ENCODE measurements at regions of chr1 and their contacts with region 1.

Region 1: GRCh38 chr1:93345633-93346420 is at the start of gene DR1:
- DNase-seq: peak; percentile 73 to 93
- H3K4me3 ChIP-seq: peak within 1 kb of the TSS; percentile 44 to 88 (median 78)
- H3K27ac ChIP-seq: peak within 1 kb of the TSS; percentile 92
- H3K4me1 ChIP-seq: no peaks in the 10 kb centered on the region
- H3K27me3 ChIP-seq: no peaks in the 10 kb centered on the region
- CTCF ChIP-seq: no peak
- EP300 ChIP-seq: peak in 1 of 2 experiments; percentile 24; a peak in 1 of 3 replicates
- POLR2A ChIP-seq: peak; percentile 82 to 92
- RAD21 ChIP-seq: no peak; a peak in 2 of 4 replicates
- total RNA-seq, gene DR1: 60.0 and 62.3 TPM in 2 replicates

Region 2: GRCh38 chr1:93328809-93329760 is 16.7 kb before region 1 on chr1:
- CTCF ChIA-PET with region 1: no interaction called
- POLR2A ChIA-PET with region 1: interaction called, 35 read pairs
- DNase-seq: no peak
- H3K4me3 ChIP-seq: no peak overlapping the region
- H3K27ac ChIP-seq: no peak overlapping the region
- H3K4me1 ChIP-seq: peaks cover 0 to 6% (median 0%) of the 10 kb centered on the region in 4 experiments; a peak in 1 of 7 replicates
- H3K27me3 ChIP-seq: no peaks in the 10 kb centered on the region
- CTCF ChIP-seq: no peak
- EP300 ChIP-seq: no peak
- POLR2A ChIP-seq: no peak
- RAD21 ChIP-seq: no peak

Measured in H1 (cell line).